ENCODE measurements at regions of chr10 and their contacts with region 1.

Region 1: DNA sequence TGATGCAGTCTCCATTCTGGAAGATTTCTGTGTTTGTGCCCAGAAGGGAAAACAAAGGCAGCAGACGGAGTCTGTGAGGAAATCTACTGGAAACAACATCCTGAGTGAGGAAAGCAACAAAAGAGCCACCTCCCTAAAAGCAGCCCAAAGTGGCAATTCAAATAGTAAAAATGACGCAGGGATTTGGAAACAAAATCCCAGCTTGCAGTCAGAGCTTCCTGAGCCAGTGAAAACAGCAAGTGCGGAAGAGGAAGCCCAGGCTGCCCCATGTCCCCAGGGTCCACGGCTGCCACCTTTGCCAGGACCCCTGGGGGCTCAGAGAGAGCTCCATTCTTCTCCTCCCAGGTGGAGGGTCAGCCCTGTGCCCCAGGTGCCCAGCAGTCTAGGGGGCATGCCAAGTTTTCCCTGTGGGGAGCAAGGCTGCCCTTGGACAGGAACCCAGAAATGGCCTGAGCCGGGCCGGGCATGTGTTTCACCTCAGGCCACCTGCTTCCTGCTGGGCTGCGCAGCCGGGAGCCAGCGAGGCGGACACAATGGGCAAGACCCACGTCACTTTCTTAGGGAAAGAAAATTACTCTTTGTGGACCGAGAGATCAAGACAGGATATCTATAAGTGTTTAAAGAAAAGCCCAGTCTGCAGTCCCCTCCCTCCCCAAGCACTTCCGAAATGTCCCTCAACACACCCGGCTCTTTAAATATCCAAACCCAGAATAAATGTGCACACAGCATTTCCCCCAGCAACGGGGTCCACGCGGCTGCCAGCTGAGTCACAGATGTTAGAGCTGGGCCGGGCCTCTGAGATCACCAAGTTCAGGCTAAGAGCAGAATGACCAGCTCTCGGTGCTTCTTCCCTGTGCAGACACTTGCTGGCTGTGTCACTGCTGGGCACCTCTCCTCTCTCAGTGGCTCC is 231.1 kb downstream of the ARHGAP12 start:
- DNase-seq: peak; percentile 94
- ATAC-seq: peak; percentile 75 to 88

Region 2: DNA sequence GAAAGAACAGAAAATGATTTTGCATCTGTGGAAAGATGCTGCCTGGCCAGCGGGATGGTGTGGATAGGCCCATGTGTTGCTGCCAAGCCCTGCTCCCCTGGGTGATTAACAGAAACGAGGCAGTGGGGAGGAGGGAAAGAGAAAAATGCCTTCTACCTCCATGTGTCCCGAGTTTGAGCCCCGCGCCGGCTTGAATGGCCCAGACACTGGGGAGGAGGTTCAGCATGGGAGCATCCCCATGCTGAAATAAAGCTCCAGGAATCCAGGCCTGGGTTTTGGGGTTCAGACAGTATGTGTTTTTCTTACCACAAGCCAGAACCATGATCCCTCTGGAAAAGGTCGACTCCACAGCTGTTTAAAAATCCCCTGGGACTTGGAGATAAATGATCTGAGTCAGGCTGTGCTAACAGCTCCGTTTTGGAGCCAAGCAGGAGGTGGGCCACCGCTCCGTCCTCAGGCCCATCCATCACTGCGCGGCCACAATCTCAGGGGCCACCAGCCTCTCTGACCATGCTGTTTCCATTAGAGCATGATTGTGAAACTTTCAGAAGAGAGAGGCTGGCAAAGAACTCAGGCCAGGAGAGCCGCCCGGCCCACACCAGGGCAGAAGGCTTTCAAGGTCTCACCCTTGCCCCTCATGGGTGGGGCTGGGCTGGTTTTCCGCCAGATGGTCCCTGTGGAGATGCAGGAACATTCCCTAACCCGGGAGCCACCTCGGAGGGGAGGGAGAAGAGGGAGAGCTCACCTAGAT is 78.8 kb before region 1 on chr10:
- intact Hi-C with region 1: loop called in 1 of 2 experiments (anchors 10 kb)
- DNase-seq: peak; percentile 43
- ATAC-seq: peak; percentile 64 to 69

Region 3: DNA sequence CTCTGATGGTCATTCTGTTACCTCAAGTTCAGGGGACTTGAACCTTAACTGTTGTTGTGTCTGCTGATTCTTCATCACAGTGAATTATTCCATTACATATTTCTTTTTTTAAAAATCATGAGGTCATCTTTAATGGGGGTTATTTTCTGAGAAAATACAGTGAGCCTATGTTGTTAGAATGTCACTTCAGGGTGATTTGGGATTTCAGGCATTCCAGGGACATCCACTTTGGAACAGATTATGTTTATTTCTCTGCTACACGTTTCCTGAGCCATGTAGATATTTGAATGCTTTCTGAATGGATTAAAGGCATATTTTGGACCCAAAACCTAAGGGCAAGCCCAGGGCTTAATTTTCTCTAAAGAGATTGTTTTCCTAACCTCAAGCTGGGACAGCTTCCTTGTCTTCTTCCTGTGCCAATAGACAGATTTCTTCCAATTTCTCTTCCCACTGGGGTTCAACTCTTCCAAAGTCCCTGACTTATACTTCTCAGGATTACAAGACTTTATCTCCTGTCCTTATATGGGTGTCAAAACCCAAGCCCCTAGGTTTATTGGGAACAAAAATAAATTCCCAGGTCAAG is 40.6 kb before region 1 on chr10:
- intact Hi-C with region 1: no loop called
- DNase-seq: no peak
- ATAC-seq: peak; percentile 79 to 82

Region 4: DNA sequence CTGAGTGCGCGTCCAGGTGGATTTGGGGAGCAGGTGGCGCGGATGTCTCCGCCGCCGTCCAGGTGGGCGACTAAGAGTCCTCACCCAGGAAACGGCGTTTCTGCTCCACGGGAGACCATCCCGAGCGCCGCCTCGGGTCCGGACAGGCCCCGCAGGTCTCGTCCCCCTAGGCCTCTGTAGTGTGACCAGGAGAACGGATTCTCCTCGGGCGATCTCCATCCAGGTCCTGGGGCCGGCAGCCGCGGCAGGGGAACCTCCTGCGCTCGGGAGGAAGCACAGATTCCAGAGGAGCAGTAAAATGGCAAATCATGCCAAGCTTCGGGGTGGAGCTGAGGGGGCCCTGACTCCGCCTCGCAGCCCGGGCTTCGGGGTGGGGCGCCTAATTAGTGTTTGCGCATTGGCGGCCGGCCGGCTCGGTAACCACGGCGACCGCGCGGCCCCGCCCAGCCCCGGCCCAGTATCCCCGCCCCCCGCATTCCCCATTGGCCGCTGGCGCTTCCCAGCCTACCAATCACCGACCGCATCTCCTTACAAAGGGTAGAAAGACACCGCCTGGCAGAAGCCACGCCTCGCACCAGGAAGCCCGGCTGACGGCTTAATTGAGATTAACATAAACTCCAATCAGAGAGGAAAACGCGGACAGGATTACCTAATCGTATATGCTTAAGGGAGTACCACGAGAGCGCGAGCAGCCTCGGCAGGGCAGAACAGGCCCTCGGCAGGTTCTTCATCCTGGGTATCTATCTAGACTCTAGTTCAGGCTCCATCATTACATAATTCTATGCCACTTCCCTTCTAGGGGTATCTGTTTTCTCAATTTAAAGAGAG is 62.5 kb after region 1 on chr10:
- intact Hi-C with region 1: loop called in 1 of 2 experiments (anchors 2 kb)
- DNase-seq: peak; percentile 97
- ATAC-seq: peak; percentile 95 to 96